Heart right ventricle (tissue), 16 donors: ENCODE measurements at regions of chr11 and their contacts with region 1.

Region 1: GRCh38 chr11:35404388-35404775 is 15.0 kb downstream of the SLC1A2 start:
- DNase-seq: peak in 1 of 2 donors; percentile 20
- ATAC-seq: peak in 2 of 8 donors; percentile 40 to 42
- H3K4me3 ChIP-seq: no peak overlapping the region
- H3K27ac ChIP-seq: no peak overlapping the region
- H3K4me1 ChIP-seq: peaks cover 0 to 4% (median 0%) of the 10 kb centered on the region in 9 donors
- H3K27me3 ChIP-seq: peaks cover 0 to 17% (median 4%) of the 10 kb centered on the region in 7 donors
- CTCF ChIP-seq: peak in 7 of 9 donors; percentile 42 to 54 (median 47)

Region 2: DNA sequence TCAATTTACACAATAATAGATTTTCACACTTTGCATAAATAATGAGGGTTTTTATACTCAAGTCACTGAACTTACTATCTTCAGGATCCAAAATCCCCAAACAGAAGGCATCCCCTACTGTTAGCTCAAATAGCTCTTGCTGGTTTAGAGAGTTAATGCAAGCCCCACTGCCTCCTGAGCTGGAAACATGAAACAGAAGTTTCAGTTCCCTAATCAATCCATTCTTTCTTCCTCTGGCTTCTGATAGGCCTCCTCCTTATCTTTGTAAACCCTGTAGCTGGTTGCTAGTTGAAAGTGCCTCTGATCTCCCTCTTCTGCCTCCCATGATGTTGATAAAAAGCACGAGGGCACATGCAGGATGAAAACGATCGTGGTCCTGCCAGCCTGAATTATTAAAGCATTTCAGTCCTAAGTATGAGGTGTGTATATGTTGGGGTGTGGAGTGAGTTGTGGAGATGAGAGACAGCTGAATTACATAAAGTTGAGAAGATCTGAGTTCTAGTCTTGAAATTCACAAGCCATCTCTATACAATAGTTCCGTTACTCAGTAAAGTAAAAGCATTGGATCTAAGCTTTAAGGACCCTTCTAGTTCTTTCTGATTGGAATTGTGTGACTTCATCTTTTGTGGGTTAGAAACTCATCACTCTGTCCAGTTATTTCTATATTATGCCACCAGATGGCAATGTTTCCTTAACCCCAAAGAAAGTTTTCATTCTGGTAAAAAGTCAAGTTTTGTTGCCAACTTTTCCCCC is 818.5 kb before region 1 on chr11:
- intact Hi-C with region 1: loop called in 2 of 10 experiments (anchors 5 to 10 kb)
- DNase-seq: no peak
- ATAC-seq: peak in 5 of 8 donors; percentile 13 to 51 (median 28)
- H3K4me3 ChIP-seq: peak overlapping the region in 4 of 10 donors; percentile 24 to 32 (median 24)
- H3K27ac ChIP-seq: no peak overlapping the region
- H3K4me1 ChIP-seq: peaks cover 0 to 13% (median 6%) of the 10 kb centered on the region in 9 donors
- H3K27me3 ChIP-seq: peaks cover 0 to 7% (median 2%) of the 10 kb centered on the region in 7 donors
- CTCF ChIP-seq: peak; percentile 49 to 78 (median 71)

Region 3: GRCh38 chr11:34732831-34733230 is 671.6 kb before region 1 on chr11:
- intact Hi-C with region 1: no loop called
- DNase-seq: no peak
- ATAC-seq: no peak
- H3K4me3 ChIP-seq: no peak overlapping the region
- H3K27ac ChIP-seq: no peak overlapping the region
- H3K4me1 ChIP-seq: no peaks in the 10 kb centered on the region
- H3K27me3 ChIP-seq: peaks cover 0 to 3% (median 0%) of the 10 kb centered on the region in 7 donors
- CTCF ChIP-seq: no peak

Region 4: GRCh38 chr11:35334385-35335090 is 69.8 kb before region 1 on chr11:
- intact Hi-C with region 1: no loop called
- DNase-seq: no peak
- ATAC-seq: no peak
- H3K4me3 ChIP-seq: no peak overlapping the region
- H3K27ac ChIP-seq: peak overlapping the region in 1 of 10 donors; percentile 27
- H3K4me1 ChIP-seq: peaks cover 0 to 50% (median 14%) of the 10 kb centered on the region in 9 donors
- H3K27me3 ChIP-seq: no peaks in the 10 kb centered on the region
- CTCF ChIP-seq: no peak